K562 (cell line): ENCODE measurements at regions of chr2 and their contacts with region 1.

Region 1: GRCh38 chr2:33275689-33276444 is 200.6 kb upstream of the RASGRP3 start:
- DNase-seq: peak; percentile 54 to 73 (median 63)
- ATAC-seq: peak; percentile 91
- H3K4me3 ChIP-seq: no peak overlapping the region
- H3K27ac ChIP-seq: no peak overlapping the region; the same call in 2 of the 3 replicates
- H3K4me1 ChIP-seq: peaks cover 0 to 6% of the 10 kb centered on the region in 2 experiments; a peak in 2 of 5 replicates
- H3K27me3 ChIP-seq: no peaks in the 10 kb centered on the region
- CTCF ChIP-seq: no peak
- EP300 ChIP-seq: peak; percentile 68
- POLR2A ChIP-seq: no peak
- RAD21 ChIP-seq: no peak

Region 2: GRCh38 chr2:32951672-32952071 is 324.2 kb before region 1 on chr2:
- CTCF ChIA-PET with region 1: no interaction called
- POLR2A ChIA-PET with region 1: no interaction called
- in situ Hi-C with region 1: no loop called
- intact Hi-C with region 1: loop called (anchors 10 kb)
- DNase-seq: no peak
- ATAC-seq: no peak
- H3K4me3 ChIP-seq: no peak overlapping the region
- H3K27ac ChIP-seq: no peak overlapping the region
- H3K4me1 ChIP-seq: peaks cover 26 to 42% of the 10 kb centered on the region in 2 experiments; a peak in 4 of 5 replicates
- H3K27me3 ChIP-seq: no peaks in the 10 kb centered on the region
- CTCF ChIP-seq: no peak
- EP300 ChIP-seq: no peak
- POLR2A ChIP-seq: no peak
- RAD21 ChIP-seq: no peak

Region 3: GRCh38 chr2:33042265-33042664 is 233.6 kb before region 1 on chr2:
- CTCF ChIA-PET with region 1: no interaction called
- POLR2A ChIA-PET with region 1: no interaction called
- in situ Hi-C with region 1: no loop called
- intact Hi-C with region 1: loop called (anchors 5 kb)
- DNase-seq: no peak
- ATAC-seq: no peak
- H3K4me3 ChIP-seq: no peak overlapping the region
- H3K27ac ChIP-seq: no peak overlapping the region
- H3K4me1 ChIP-seq: no peaks in the 10 kb centered on the region
- H3K27me3 ChIP-seq: peaks cover 0 to 8% of the 10 kb centered on the region in 2 experiments; a peak in 1 of 5 replicates
- CTCF ChIP-seq: no peak
- EP300 ChIP-seq: no peak
- POLR2A ChIP-seq: no peak
- RAD21 ChIP-seq: no peak

Region 4: GRCh38 chr2:33426666-33427231 is 150.9 kb after region 1 on chr2:
- CTCF ChIA-PET with region 1: no interaction called
- POLR2A ChIA-PET with region 1: no interaction called
- in situ Hi-C with region 1: no loop called
- intact Hi-C with region 1: no loop called
- DNase-seq: peak in 2 of 4 experiments; percentile 13 to 52
- ATAC-seq: no peak; the same call in 2 of the 3 replicates
- H3K4me3 ChIP-seq: no peak overlapping the region
- H3K27ac ChIP-seq: no peak overlapping the region
- H3K4me1 ChIP-seq: peaks cover 0 to 3% of the 10 kb centered on the region in 2 experiments; a peak in 1 of 5 replicates
- H3K27me3 ChIP-seq: no peaks in the 10 kb centered on the region; a peak in 1 of 5 replicates
- CTCF ChIP-seq: no peak
- EP300 ChIP-seq: no peak
- POLR2A ChIP-seq: no peak
- RAD21 ChIP-seq: no peak